H1 (cell line): ENCODE measurements at regions of chr6 and their contacts with region 1.

Region 1: GRCh38 chr6:143940011-143940597 is 68.0 kb downstream of the PLAGL1 start:
- DNase-seq: no peak
- H3K4me3 ChIP-seq: no peak overlapping the region
- H3K27ac ChIP-seq: no peak overlapping the region
- H3K4me1 ChIP-seq: peaks cover 2 to 18% (median 9%) of the 10 kb centered on the region in 4 experiments; a peak in 5 of 7 replicates
- H3K27me3 ChIP-seq: no peaks in the 10 kb centered on the region; a peak in 1 of 7 replicates
- CTCF ChIP-seq: peak; percentile 70 to 98 (median 79)
- EP300 ChIP-seq: no peak
- POLR2A ChIP-seq: no peak
- RAD21 ChIP-seq: peak; percentile 68 to 77

Region 2: DNA sequence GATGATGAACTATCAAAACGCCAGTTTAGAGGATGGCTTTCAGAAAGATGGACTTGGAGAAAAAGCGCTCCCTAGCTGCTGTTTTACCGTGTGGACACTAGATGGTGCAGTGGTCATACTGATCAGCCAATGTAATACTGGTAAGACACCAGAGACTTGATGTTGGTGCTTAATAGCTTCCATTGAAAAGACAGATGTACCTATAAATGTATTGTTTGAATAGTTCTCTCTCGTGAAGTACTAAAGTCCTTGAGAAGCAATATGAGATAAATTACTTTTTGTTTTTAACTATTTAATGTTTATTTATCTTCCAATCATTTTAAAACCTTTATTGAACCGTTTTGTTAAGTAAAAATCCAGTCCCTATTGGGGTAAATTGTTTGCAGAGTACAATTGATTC is 364.7 kb before region 1 on chr6:
- CTCF ChIA-PET with region 1: interaction called, 29 read pairs
- POLR2A ChIA-PET with region 1: no interaction called
- DNase-seq: no peak
- H3K4me3 ChIP-seq: no peak overlapping the region
- H3K27ac ChIP-seq: no peak overlapping the region
- H3K4me1 ChIP-seq: peaks cover 0 to 2% (median 0%) of the 10 kb centered on the region in 4 experiments; a peak in 1 of 7 replicates
- H3K27me3 ChIP-seq: no peaks in the 10 kb centered on the region
- CTCF ChIP-seq: peak in 2 of 3 experiments; percentile 82 to 85; a peak in 3 of 4 replicates
- EP300 ChIP-seq: no peak
- POLR2A ChIP-seq: no peak
- RAD21 ChIP-seq: peak; percentile 94 to 97

Region 3: DNA sequence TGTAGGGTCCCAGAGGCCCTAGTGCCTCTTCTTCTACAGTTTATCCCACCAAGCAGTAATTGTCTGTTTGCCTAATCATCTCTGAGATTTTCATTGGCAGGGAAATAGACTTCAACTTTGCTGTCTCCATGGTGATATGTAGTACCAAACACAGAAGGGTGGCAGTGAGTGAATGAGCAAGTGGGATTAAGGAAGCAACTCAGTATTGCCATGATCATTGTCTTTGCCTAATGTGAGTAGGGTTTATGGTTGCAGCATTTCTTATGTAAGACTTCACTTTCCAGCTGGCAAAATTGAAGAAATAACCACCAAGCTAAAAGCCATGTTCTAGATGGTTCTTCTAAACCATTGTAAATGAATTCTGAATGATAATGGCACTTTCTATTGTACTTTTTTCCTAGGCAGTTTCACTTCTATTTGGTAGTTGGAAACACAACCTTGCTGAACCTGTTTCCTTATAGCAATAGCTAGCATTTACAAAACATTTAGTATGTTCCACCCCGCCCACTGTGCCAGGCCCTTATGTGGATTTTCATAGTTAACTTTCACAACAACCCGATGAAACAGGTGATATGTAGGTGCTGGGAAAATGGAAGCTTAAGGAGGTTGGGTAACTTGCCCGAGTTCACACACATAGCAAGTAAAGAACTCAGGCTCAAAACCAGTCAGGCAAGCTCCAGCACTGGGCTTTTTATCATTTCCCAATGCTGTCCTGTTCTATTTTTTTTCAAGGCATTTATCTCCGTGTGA is 43.8 kb before region 1 on chr6:
- CTCF ChIA-PET with region 1: interaction called, 20 read pairs
- POLR2A ChIA-PET with region 1: no interaction called
- DNase-seq: no peak
- H3K4me3 ChIP-seq: no peak overlapping the region
- H3K27ac ChIP-seq: no peak overlapping the region
- H3K4me1 ChIP-seq: peaks cover 0 to 7% (median 0%) of the 10 kb centered on the region in 4 experiments; a peak in 2 of 7 replicates
- H3K27me3 ChIP-seq: no peaks in the 10 kb centered on the region
- CTCF ChIP-seq: no peak
- EP300 ChIP-seq: no peak
- POLR2A ChIP-seq: no peak
- RAD21 ChIP-seq: no peak

Region 4: DNA sequence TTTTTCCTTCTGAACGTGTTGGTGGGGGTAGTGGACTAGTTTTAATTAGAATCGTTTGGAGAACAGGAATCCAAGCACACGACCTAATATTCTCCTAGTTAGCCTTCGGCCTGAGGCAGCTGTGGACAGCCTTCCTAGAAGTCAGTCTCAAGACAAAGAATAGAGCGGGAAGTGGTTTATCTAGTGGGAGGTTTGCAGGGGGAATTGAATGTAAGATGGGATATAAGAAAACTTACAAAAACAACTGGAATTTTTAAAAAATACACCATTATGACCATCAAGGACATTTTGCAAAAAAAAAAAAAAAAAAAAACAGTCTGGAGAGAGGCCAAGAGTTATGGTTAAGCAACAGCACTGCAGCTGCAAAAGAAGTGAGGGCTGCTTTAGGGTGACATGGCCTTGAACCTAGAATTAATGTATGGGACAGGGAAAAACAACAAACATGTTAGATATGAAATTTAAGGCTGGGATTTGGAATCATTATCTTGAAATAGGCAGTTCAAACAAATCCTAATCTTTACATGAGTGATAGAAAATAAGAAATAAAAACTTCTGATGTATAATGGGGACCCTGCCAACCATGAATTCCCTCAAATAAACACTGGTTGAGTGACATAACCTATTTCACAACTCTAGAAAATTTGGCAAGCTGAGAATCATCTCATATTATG is 27.7 kb after region 1 on chr6:
- CTCF ChIA-PET with region 1: interaction called, 591 read pairs
- POLR2A ChIA-PET with region 1: interaction called, 3 read pairs
- DNase-seq: no peak
- H3K4me3 ChIP-seq: no peak overlapping the region
- H3K27ac ChIP-seq: no peak overlapping the region
- H3K4me1 ChIP-seq: peaks cover 8 to 33% (median 22%) of the 10 kb centered on the region in 4 experiments; a peak in 6 of 7 replicates
- H3K27me3 ChIP-seq: peaks cover 87 to 95% (median 94%) of the 10 kb centered on the region in 4 experiments
- CTCF ChIP-seq: no peak
- EP300 ChIP-seq: no peak
- POLR2A ChIP-seq: no peak
- RAD21 ChIP-seq: no peak

Region 5: DNA sequence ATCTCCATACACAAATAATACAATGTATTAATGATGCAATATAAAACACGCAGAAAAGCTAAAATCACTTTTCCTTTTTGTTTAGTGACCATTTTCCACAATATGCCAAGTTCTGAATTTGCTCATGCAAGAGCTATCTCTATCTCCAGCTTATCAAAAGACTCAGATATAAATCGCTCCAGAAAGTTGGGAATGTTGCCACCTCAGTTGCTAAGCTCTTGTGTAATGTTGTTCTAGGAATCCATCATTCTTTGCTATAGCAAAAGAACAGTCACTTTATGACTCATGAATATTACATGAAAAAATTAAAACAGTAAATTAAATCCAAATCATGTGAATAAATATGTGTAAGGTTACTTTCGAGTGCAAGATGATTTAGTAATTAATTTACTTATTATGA is 59.3 kb after region 1 on chr6:
- CTCF ChIA-PET with region 1: interaction called, 366 read pairs
- POLR2A ChIA-PET with region 1: no interaction called
- DNase-seq: no peak
- H3K4me3 ChIP-seq: no peak overlapping the region
- H3K27ac ChIP-seq: no peak overlapping the region
- H3K4me1 ChIP-seq: no peaks in the 10 kb centered on the region
- H3K27me3 ChIP-seq: no peaks in the 10 kb centered on the region; a peak in 1 of 7 replicates
- CTCF ChIP-seq: no peak
- EP300 ChIP-seq: no peak
- POLR2A ChIP-seq: no peak
- RAD21 ChIP-seq: no peak

Region 6: GRCh38 chr6:144027932-144028587 is 88.0 kb after region 1 on chr6:
- CTCF ChIA-PET with region 1: interaction called, 70 read pairs
- POLR2A ChIA-PET with region 1: no interaction called
- DNase-seq: no peak
- H3K4me3 ChIP-seq: no peak overlapping the region
- H3K27ac ChIP-seq: no peak overlapping the region
- H3K4me1 ChIP-seq: no peaks in the 10 kb centered on the region
- H3K27me3 ChIP-seq: no peaks in the 10 kb centered on the region
- CTCF ChIP-seq: no peak
- EP300 ChIP-seq: no peak
- POLR2A ChIP-seq: no peak
- RAD21 ChIP-seq: no peak

Region 7: DNA sequence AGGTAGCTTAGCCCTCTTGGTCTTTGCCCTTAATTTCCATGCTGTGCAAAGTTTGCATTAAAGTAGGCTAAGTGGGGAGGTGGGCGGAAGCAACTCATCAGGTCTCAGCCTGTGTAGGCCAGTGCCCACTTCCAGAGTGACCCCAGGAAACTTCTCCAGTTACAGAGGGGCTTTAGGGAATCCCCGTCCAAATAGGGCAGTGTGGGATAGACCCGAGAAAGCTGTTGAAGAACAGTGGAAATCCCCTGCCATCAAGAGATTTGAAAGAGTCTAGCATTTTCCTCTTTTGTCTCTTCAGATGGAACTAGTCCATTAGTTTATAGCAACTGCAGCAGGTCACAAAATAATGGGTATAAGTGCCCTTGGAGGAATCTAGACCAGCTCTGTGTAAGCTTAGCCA is 135.1 kb after region 1 on chr6:
- CTCF ChIA-PET with region 1: interaction called, 11 read pairs
- POLR2A ChIA-PET with region 1: no interaction called
- DNase-seq: no peak
- H3K4me3 ChIP-seq: no peak overlapping the region
- H3K27ac ChIP-seq: no peak overlapping the region
- H3K4me1 ChIP-seq: no peaks in the 10 kb centered on the region
- H3K27me3 ChIP-seq: no peaks in the 10 kb centered on the region
- CTCF ChIP-seq: no peak
- EP300 ChIP-seq: no peak
- POLR2A ChIP-seq: no peak
- RAD21 ChIP-seq: no peak